ENCODE measurements at regions of chr3 and their contacts with region 1.

Region 1: DNA sequence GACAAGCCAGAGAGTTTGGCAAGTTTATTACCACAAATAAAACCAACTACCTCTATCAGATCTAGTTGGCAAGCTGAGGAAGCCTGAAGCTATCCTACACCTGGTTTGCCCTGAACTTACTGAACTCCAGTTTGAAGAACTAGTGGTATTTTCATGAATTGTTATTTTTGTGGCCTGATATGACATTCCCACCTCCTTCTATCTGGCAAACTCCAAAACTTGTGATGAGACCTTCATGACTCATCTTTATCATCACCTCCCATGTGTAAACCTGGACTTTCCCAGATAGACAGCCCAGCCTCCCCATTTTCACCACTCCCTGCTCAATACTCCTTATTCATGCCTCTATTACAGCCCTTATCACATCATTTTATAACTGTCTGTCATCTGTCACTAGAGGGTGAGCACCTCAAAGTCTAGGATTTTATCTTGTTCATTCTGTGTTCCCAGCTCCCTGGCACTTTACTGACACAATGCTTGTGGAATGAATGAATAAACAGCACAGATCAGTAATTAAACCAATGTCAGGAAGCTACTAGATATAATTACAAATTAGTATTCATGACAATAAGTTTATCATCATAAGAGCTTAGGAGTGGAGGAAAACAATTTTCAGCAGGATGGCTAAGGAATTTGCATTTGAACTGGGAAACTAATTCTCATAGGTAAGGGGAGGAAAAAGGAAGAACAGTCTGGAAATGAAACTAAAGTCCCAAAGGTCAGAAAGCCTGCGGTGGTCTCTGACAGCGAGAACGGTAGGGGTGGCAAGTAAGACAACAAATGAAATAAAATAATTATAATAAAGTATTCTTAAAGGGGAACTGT is 13.2 kb upstream of the TRANK1 start:
- DNase-seq: no peak
- ATAC-seq: no peak
- H3K4me3 ChIP-seq: no peak overlapping the region
- H3K27ac ChIP-seq: no peak overlapping the region
- H3K4me1 ChIP-seq: peaks cover 10% of the 10 kb centered on the region; the same call in 1 of the 2 replicates
- H3K27me3 ChIP-seq: no peaks in the 10 kb centered on the region; a peak in 1 of 5 replicates
- CTCF ChIP-seq: no peak
- EP300 ChIP-seq: no peak
- POLR2A ChIP-seq: no peak
- RAD21 ChIP-seq: no peak

Region 2: DNA sequence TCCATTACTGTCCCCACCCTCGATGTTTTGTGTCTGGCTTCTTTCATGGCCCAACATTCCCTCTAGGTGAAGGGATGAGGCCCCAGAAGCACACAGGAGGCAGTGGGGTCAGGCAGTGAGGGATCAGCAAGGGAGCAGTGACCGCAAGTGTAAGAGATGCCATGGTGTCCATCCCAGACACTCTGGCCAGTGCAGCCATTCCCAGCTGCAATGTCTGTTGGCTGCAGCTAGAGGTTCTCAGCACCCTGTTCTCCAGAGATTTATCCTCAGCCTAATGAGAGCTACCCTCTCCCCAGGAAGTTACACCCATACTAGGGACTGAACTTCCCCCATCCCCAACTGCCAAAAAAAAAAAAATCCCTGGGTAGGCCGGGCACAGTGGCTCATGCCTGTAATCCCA is 53.4 kb before region 1 on chr3:
- CTCF ChIA-PET with region 1: interaction called, 22 read pairs
- POLR2A ChIA-PET with region 1: interaction called, 12 read pairs
- in situ Hi-C with region 1: loop called (anchors 5 kb)
- intact Hi-C with region 1: loop called (anchors 1 kb)
- DNase-seq: peak; percentile 19
- ATAC-seq: peak; percentile 92
- H3K4me3 ChIP-seq: no peak overlapping the region
- H3K27ac ChIP-seq: no peak overlapping the region
- H3K4me1 ChIP-seq: peaks cover 16% of the 10 kb centered on the region; the same call in 1 of the 2 replicates
- H3K27me3 ChIP-seq: no peaks in the 10 kb centered on the region
- CTCF ChIP-seq: peak; percentile 84
- EP300 ChIP-seq: no peak
- POLR2A ChIP-seq: no peak
- RAD21 ChIP-seq: peak; percentile 63

Region 3: GRCh38 chr3:36993326-36994283 is 35.5 kb after region 1 on chr3 and contains the start of gene MLH1:
- CTCF ChIA-PET with region 1: no interaction called
- POLR2A ChIA-PET with region 1: interaction called, 10 read pairs
- in situ Hi-C with region 1: no loop called
- intact Hi-C with region 1: no loop called
- DNase-seq: peak; percentile 100
- ATAC-seq: peak; percentile 87
- H3K4me3 ChIP-seq: peak within 1 kb of the TSS; percentile 77 to 89 (median 82)
- H3K27ac ChIP-seq: peak within 1 kb of the TSS; percentile 96
- H3K4me1 ChIP-seq: peaks cover 36% of the 10 kb centered on the region
- H3K27me3 ChIP-seq: no peaks in the 10 kb centered on the region; a peak in 1 of 5 replicates
- CTCF ChIP-seq: no peak
- EP300 ChIP-seq: no peak
- POLR2A ChIP-seq: peak; percentile 83 to 87
- RAD21 ChIP-seq: peak; percentile 48; the same call in 1 of the 2 replicates
- total RNA-seq, gene MLH1: 70.8 and 84.7 TPM in 2 replicates

Measured in HepG2 (cell line).